PC-9 (cell line): ENCODE measurements at regions of chr18 and their contacts with region 1.

Region 1: GRCh38 chr18:13800505-13801259 is 23.3 kb upstream of the MC5R start:
- DNase-seq: peak in 1 of 2 experiments; percentile 89
- H3K4me3 ChIP-seq: no peak overlapping the region
- H3K27ac ChIP-seq: no peak overlapping the region
- H3K4me1 ChIP-seq: peaks cover 13% of the 10 kb centered on the region
- H3K27me3 ChIP-seq: no peaks in the 10 kb centered on the region
- CTCF ChIP-seq: no peak; the same call in 1 of the 2 replicates

Region 2: DNA sequence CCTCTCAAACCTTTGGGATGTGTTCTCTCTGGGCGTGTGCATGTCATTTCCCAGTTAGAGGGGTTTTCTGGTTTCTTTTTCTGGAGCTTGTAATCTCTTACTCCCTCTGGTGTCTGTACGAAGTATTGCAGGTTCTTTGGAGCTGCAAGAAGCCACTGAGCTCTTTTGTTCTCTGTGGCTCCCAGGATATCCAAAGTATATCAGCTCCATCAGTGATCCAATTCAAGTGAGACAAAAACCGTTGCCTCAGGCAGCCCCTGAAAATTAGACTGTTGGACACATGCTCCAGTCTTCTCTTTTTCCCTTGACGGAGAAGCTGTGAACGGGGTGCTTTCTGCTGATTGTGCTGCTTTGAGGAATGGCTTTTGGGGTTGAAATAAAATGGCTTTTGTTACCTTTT is 641.1 kb before region 1 on chr18:
- CTCF ChIA-PET with region 1: interaction called, 4 read pairs
- POLR2A ChIA-PET with region 1: no interaction called
- intact Hi-C with region 1: loop called (anchors 10 kb)
- DNase-seq: peak in 1 of 2 experiments; percentile 39
- H3K4me3 ChIP-seq: no peak overlapping the region
- H3K27ac ChIP-seq: no peak overlapping the region
- H3K4me1 ChIP-seq: no peaks in the 10 kb centered on the region
- H3K27me3 ChIP-seq: peaks cover 17% of the 10 kb centered on the region; the same call in 1 of the 2 replicates
- CTCF ChIP-seq: peak; percentile 92

Region 3: DNA sequence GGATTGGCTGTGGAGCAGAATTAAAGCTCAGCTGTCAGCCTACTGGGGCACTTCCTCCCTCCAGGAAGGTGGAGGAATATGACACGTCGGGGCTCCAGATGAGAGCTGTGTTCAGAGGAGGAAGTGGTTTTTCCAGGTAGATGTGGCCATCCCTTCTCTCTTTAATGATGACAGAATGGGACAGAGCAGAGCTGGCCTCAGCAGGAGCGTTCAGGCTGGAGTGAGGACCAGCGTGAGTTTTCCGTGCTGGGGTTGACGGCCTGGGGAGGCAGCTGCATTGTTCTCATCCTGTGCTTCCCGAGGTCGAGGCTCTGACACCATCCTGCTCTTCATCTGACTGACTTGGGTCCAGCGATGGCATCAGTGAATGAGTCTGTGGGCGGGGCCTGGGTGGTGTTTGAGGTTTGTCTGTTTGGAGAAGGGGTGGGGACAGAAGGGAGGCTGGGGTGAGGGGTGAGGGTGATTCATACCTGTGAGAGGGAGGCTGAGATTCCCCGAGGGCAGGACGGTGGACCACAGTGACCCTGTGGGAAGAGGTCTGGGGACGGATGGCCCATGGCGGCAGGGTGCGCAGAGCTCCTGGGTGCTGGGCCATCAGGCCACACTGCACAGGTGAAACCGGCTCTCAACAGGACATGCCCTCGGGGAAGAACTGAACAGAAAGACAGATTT is 375.1 kb before region 1 on chr18:
- CTCF ChIA-PET with region 1: no interaction called
- POLR2A ChIA-PET with region 1: no interaction called
- intact Hi-C with region 1: loop called (anchors 10 kb)
- DNase-seq: peak in 1 of 2 experiments; percentile 85
- H3K4me3 ChIP-seq: no peak overlapping the region
- H3K27ac ChIP-seq: no peak overlapping the region
- H3K4me1 ChIP-seq: no peaks in the 10 kb centered on the region
- H3K27me3 ChIP-seq: peaks cover 47% of the 10 kb centered on the region
- CTCF ChIP-seq: no peak

Region 4: DNA sequence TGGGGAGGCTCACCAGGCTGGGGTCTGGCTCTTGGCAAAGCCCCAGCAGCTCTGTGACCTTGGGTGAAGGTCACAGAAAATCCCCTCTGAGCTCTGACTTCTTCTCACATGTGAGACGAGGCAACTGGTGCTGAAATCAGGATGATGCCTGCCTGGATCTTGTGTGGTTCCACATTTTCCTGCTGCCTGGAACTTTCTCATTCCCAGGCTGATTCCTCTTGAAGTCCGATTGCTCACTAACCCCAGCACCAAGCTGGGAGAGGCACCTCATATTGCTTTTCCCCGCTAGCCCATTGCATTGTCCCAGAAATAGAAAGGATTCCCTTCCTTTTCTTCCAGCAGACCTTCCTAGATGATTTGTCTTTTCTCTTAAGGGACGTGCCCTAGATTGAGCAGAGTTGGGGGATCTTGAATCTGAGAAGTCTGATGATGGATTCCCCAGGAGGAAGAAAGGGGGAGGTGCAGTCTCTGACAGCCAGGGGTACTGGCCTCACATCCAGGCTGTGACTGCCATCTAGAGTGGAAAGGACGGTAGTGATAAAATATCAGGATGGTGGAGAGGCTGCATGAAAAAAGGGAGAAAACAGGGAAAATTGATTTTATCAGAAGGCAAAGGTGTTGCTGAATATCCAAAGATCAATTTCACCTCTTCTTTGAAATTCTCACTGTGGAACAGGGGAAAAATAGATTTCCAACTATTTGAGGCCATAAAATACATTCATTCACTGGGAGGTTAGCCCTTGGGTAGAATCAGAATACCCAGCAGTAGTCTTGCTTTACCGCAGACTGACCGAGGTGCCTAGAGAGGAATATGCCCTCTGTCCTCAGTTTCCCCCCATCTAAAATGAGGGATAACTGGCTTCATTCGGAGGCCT is 170.6 kb before region 1 on chr18:
- CTCF ChIA-PET with region 1: no interaction called
- POLR2A ChIA-PET with region 1: no interaction called
- intact Hi-C with region 1: loop called (anchors 5 kb)
- DNase-seq: peak; percentile 37 to 50
- H3K4me3 ChIP-seq: no peak overlapping the region
- H3K27ac ChIP-seq: no peak overlapping the region
- H3K4me1 ChIP-seq: no peaks in the 10 kb centered on the region
- H3K27me3 ChIP-seq: peaks cover 62% of the 10 kb centered on the region
- CTCF ChIP-seq: peak; percentile 77

Region 5: GRCh38 chr18:13726232-13726971 is 74.3 kb before region 1 on chr18 and contains the starts of genes FAM210A and RNMT:
- CTCF ChIA-PET with region 1: interaction called, 3 read pairs
- POLR2A ChIA-PET with region 1: no interaction called
- intact Hi-C with region 1: loop called (anchors 2 kb)
- DNase-seq: peak; percentile 87 to 94
- H3K4me3 ChIP-seq: peak within 1 kb of the TSS; percentile 97
- H3K27ac ChIP-seq: peak within 1 kb of the TSS; percentile 82
- H3K4me1 ChIP-seq: peaks cover 19% of the 10 kb centered on the region
- H3K27me3 ChIP-seq: no peaks in the 10 kb centered on the region
- CTCF ChIP-seq: no peak
- total RNA-seq, gene FAM210A: 27.3 and 29.3 TPM in 2 replicates
- total RNA-seq, gene RNMT: 32.0 and 48.8 TPM in 2 replicates